GM12878 (cell line): ENCODE measurements at regions of chr13 and their contacts with region 1.

Region 1: DNA sequence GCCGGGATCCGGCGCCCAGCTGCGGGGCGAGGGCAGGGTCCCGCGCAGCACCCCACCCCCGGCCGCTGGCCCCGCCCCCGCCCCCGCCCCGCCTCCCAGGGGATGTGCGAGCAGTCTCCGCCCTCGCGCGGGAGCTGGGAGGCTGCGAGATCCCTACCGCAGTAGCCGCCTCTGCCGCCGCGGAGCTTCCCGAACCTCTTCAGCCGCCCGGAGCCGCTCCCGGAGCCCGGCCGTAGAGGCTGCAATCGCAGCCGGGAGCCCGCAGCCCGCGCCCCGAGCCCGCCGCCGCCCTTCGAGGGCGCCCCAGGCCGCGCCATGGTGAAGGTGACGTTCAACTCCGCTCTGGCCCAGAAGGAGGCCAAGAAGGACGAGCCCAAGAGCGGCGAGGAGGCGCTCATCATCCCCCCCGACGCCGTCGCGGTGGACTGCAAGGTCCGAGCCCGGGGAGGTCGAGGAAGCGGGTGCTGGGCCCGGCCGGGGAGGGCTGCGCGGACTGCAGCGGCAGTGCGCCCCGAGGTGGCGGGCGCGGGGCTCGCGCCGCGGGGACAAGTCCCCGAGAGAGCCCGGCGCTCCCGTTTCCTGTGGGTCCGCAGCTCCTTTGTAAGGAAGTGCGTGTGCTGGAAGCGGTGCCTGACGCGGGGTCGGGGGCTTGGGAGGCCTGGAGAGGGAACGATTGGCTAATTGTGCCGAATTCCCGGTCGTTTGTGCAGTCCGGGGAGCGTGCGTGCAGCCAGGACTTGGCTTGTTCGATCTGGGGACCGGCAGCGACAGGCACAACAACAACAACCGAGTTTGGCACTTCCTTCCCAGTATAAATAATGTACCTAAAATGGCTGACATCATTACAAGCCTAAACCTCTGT is at the start of gene ITM2B:
- DNase-seq: no peak
- ATAC-seq: peak; percentile 79
- H3K4me3 ChIP-seq: peak within 1 kb of the TSS; percentile 86
- H3K27ac ChIP-seq: no peak within 1 kb of the TSS
- H3K4me1 ChIP-seq: peaks cover 8% of the 10 kb centered on the region
- H3K27me3 ChIP-seq: peaks cover 6 to 8% of the 10 kb centered on the region in 2 experiments
- CTCF ChIP-seq: peak; percentile 39 to 55 (median 45); a peak in 5 of 6 replicates
- EP300 ChIP-seq: no peak
- POLR2A ChIP-seq: peak; percentile 57; the same call in 1 of the 2 replicates
- RAD21 ChIP-seq: 0 out of 2 replicates have a peak, but pooled peaks have one; percentile 24
- polyA plus RNA-seq, gene ITM2B: 3.3 to 5.0 TPM

Region 2: GRCh38 chr13:48126944-48127830 is 106.1 kb before region 1 on chr13:
- CTCF ChIA-PET with region 1: interaction called, 13 read pairs
- POLR2A ChIA-PET with region 1: no interaction called
- RAD21 ChIA-PET with region 1: interaction called, 3 read pairs
- SMC1A ChIA-PET with region 1: interaction called, 8 read pairs
- in situ Hi-C with region 1: no loop called
- intact Hi-C with region 1: loop called (anchors 2 kb)
- DNase-seq: peak; percentile 47
- ATAC-seq: peak; percentile 93
- H3K4me3 ChIP-seq: no peak overlapping the region
- H3K27ac ChIP-seq: no peak overlapping the region
- H3K4me1 ChIP-seq: no peaks in the 10 kb centered on the region
- H3K27me3 ChIP-seq: peaks cover 0 to 2% of the 10 kb centered on the region in 2 experiments; a peak in 2 of 4 replicates
- CTCF ChIP-seq: peak; percentile 58 to 72 (median 65)
- EP300 ChIP-seq: no peak
- POLR2A ChIP-seq: no peak
- RAD21 ChIP-seq: peak; percentile 69

Region 3: GRCh38 chr13:48291730-48292129 is 58.5 kb after region 1 on chr13:
- CTCF ChIA-PET with region 1: no interaction called
- POLR2A ChIA-PET with region 1: no interaction called
- RAD21 ChIA-PET with region 1: no interaction called
- SMC1A ChIA-PET with region 1: interaction called, 9 read pairs
- in situ Hi-C with region 1: no loop called
- intact Hi-C with region 1: loop called (anchors 5 kb)
- DNase-seq: no peak
- ATAC-seq: no peak
- H3K4me3 ChIP-seq: no peak overlapping the region
- H3K27ac ChIP-seq: no peak overlapping the region
- H3K4me1 ChIP-seq: peaks cover 5% of the 10 kb centered on the region
- H3K27me3 ChIP-seq: peaks cover 1 to 18% of the 10 kb centered on the region in 2 experiments; a peak in 3 of 4 replicates
- CTCF ChIP-seq: no peak
- EP300 ChIP-seq: no peak
- POLR2A ChIP-seq: no peak
- RAD21 ChIP-seq: no peak

Region 4: DNA sequence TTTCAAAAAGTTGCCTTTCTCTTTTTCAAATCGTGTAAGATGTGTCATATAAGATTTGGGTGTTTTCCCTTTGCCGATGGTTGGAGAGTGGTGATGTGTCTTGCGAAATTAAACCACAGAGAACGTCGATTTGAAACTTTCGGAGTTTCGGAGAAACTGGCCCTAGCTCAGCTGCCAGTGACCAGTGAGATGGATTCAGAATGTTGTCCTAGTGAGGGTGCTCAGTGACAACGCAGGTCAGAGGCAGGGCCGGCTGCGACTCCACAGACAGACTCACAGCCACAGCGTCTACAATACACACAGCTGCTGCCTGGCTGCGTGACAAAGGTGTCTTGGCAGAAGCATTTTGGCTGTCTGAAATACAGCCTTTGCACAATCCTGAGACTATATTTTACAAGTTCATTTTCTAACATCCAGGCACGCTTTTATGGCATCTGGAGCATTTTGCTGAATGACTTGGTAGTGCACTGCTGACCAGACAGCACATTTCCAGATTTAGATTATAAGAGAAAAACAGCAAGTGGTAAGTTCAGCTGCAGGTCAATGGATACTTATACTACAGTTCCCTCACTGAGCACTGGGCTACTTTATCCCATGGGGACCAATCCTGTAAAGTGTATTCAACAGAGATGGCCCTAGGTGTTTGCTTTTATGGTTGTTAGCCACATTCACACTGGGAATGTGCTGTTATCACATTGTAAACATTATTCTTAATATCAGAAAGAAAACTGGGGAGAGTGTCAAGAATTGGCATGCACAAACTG is 1989.5 kb after region 1 on chr13:
- CTCF ChIA-PET with region 1: no interaction called
- POLR2A ChIA-PET with region 1: no interaction called
- RAD21 ChIA-PET with region 1: no interaction called
- SMC1A ChIA-PET with region 1: no interaction called
- in situ Hi-C with region 1: no loop called
- intact Hi-C with region 1: loop called (anchors 10 kb)
- DNase-seq: no peak
- ATAC-seq: no peak; the same call in 2 of the 3 replicates
- H3K4me3 ChIP-seq: no peak overlapping the region
- H3K27ac ChIP-seq: no peak overlapping the region
- H3K4me1 ChIP-seq: peaks cover 18% of the 10 kb centered on the region
- H3K27me3 ChIP-seq: 0 out of 4 replicates have a peak, but pooled peaks cover 1 to 3% of the 10 kb centered on the region in 2 experiments
- CTCF ChIP-seq: no peak
- EP300 ChIP-seq: no peak
- POLR2A ChIP-seq: no peak
- RAD21 ChIP-seq: no peak